ENCODE measurements at regions of chr9 and their contacts with region 1.

Region 1: GRCh38 chr9:113275157-113276131 is at the starts of genes CDC26 and PRPF4:
- DNase-seq: peak; percentile 97 to 98 (median 98)
- ATAC-seq: peak; percentile 98
- H3K4me3 ChIP-seq: peak within 1 kb of the TSS; percentile 67
- H3K4me1 ChIP-seq: peaks cover 15% of the 10 kb centered on the region
- CTCF ChIP-seq: no peak
- total RNA-seq, gene CDC26: 19.3 to 45.8 (median 25.9) TPM
- total RNA-seq, gene PRPF4: 13.2 to 18.4 (median 15.8) TPM

Region 2: GRCh38 chr9:113221003-113221799 is 54.2 kb before region 1 on chr9 and contains the starts of genes FKBP15 and SLC31A1:
- intact Hi-C with region 1: loop called in 1 of 2 experiments (anchors 5 kb)
- DNase-seq: peak; percentile 98 to 99 (median 99)
- ATAC-seq: peak; percentile 97
- H3K4me3 ChIP-seq: peak within 1 kb of the TSS; percentile 71
- H3K4me1 ChIP-seq: peaks cover 32% of the 10 kb centered on the region
- CTCF ChIP-seq: no peak
- total RNA-seq, gene FKBP15: 26.6 to 30.9 (median 26.8) TPM
- total RNA-seq, gene SLC31A1: 26.5 to 63.7 (median 34.7) TPM

Region 3: GRCh38 chr9:113410207-113410864 is 134.9 kb after region 1 on chr9 and contains the starts of genes C9orf43 and POLE3:
- intact Hi-C with region 1: loop called in 1 of 2 experiments (anchors 10 kb)
- DNase-seq: peak; percentile 96 to 97 (median 97)
- ATAC-seq: peak; percentile 98
- H3K4me3 ChIP-seq: peak within 1 kb of the TSS; percentile 73
- H3K4me1 ChIP-seq: peaks cover 15% of the 10 kb centered on the region
- CTCF ChIP-seq: no peak
- total RNA-seq, gene C9orf43: 0.20 to 0.55 TPM in 2 of 3 donors, not detected in the other
- total RNA-seq, gene POLE3: 22.2 to 31.0 (median 28.6) TPM